ENCODE measurements at regions of chr13 and their contacts with region 1.

Region 1: DNA sequence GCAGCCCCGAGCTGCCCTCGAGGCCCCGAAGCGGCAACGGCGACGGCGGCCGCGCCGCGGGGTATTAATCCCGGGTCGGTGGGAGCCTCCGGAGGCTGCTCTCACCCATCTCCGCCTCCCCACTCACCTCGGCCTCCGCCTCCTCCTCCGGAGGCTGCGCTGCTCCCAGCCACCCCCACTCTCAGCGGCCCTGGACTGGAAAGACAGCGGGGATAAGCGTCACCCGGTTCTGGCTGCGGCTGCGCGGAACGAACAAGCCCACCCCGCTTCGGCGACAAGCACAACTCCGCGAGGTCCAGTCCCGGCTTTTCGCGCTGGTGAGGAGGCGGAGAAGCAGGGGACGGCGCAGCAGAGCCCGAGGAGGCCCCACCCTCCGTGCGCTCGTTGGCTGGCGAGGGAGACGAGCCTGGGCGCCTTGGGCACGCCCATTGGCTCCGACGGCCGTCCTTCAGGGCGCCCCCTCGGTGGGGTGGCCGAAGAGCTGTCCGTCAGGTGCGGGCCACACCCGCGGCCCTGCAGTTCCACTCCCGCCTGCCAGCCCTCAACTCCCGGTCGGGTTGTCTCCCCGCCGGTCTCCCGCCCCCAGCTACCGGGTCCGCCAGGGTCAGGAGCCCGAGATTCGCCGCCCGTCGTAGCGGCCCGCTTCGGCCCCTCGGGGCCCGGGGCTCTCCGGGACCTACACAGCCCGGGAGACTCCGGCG is at the start of gene ZMYM5:
- DNase-seq: peak; percentile 98
- ATAC-seq: peak; percentile 96 to 97
- total RNA-seq, gene ZMYM5: 6.4 to 8.7 TPM

Region 2: GRCh38 chr13:19633479-19634255 is 229.8 kb before region 1 on chr13 and contains the start of gene MPHOSPH8:
- intact Hi-C with region 1: no loop called
- DNase-seq: peak; percentile 96
- ATAC-seq: peak; percentile 99
- total RNA-seq, gene MPHOSPH8: 27.5 to 32.5 TPM

Region 3: GRCh38 chr13:19782049-19782726 is 81.3 kb before region 1 on chr13:
- intact Hi-C with region 1: loop called in 1 of 2 experiments (anchors 10 kb)
- DNase-seq: peak; percentile 72
- ATAC-seq: peak; percentile 77 to 82

Region 4: GRCh38 chr13:19959831-19960652 is 96.6 kb after region 1 on chr13:
- intact Hi-C with region 1: loop called in 1 of 2 experiments (anchors 5 kb)
- DNase-seq: peak; percentile 87
- ATAC-seq: peak; percentile 43 to 59

Region 5: DNA sequence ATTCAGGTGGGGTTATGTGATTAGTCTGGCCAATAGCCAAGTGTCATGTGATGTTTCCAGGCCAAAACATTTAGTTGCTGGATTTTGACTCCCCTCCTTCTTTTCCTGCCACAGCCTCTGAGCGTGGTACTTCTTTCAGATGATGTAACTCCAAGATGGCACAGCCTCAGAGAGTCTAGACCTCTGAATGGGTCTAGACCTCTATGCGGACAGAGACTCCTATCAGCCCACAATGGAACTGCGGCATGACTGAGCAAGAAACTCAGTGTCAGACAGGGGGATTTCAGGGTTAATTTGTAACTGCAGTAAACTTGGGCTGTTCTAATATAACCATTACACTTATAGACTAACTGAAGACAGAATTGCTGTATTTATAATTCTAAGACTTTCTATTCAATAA is 1638.2 kb after region 1 on chr13:
- intact Hi-C with region 1: no loop called
- DNase-seq: no peak
- ATAC-seq: no peak